Prostate gland (tissue), 2 donors: ENCODE measurements at regions of chr1 and their contacts with region 1.

Region 1: DNA sequence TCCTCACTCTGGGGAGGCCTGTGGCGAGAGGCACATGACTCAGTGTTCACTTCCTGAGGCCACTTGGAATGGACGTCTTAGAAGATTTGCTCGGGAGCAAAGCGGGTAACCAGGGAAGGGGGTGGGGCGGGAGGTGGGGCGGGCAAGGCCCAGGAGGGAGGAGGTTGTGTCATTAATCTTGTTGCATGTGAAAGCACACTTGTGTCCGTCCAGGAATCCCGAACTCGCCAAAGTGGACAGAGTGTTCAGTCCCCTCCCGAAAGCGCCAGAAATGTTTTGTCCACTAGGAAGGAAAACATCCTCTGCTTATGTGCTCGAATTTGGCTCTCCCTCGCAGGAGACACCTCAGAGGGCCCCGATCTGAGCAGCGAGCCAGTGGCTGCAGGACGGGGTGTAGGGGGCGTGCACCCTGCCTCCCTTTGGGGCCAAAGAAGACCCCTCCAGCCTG is 84.2 kb downstream of the SPSB1 start:
- DNase-seq: no peak
- H3K4me3 ChIP-seq: no peak overlapping the region
- H3K27ac ChIP-seq: peak overlapping the region; percentile 62 to 67
- H3K4me1 ChIP-seq: no peaks in the 10 kb centered on the region
- H3K27me3 ChIP-seq: no peaks in the 10 kb centered on the region
- CTCF ChIP-seq: peak in 1 of 4 experiments; percentile 6
- POLR2A ChIP-seq: no peak

Region 2: GRCh38 chr1:9428601-9429341 is 51.9 kb after region 1 on chr1:
- intact Hi-C with region 1: loop called (anchors 5 kb)
- DNase-seq: peak; percentile 100
- H3K4me3 ChIP-seq: peak overlapping the region; percentile 33 to 36
- H3K27ac ChIP-seq: peak overlapping the region; percentile 70 to 75
- H3K4me1 ChIP-seq: peaks cover 5% of the 10 kb centered on the region
- H3K27me3 ChIP-seq: no peaks in the 10 kb centered on the region
- CTCF ChIP-seq: peak in 2 of 4 experiments; percentile 55 to 58
- POLR2A ChIP-seq: peak; percentile 64